Stomach (tissue), 19 donors: ENCODE measurements at regions of chr18 and their contacts with region 1.

Region 1: DNA sequence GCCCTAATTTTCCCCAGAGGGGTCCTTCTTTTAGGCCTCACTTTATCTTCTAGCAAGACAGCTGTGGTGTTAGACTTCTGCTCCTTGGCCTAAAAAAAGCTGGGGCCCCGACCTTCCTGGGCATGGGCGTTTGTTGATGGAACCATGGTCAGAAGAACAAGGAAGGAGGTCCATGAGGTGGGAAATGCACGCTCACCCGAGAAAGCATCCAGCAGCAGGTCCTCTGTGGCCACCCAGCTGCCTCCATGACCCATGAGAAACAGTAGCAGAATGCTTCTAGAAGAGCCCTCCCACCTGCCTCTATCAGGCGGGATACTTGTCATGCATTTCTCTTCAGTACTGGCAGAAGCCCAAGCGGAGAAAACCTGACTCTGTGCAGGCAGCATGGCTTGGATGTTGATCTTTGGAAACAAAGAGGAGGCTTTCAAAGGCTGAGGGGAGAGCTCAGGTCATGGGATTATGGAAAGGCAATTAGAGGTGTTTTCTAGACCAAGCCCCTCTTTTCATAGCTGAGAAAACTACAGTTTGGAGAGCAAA is 249.1 kb downstream of the FAM210A start:
- DNase-seq: no peak
- H3K4me3 ChIP-seq: no peak overlapping the region
- H3K27ac ChIP-seq: no peak overlapping the region
- H3K4me1 ChIP-seq: peaks cover 0 to 4% (median 0%) of the 10 kb centered on the region in 4 donors
- H3K27me3 ChIP-seq: no peaks in the 10 kb centered on the region
- CTCF ChIP-seq: no peak
- EP300 ChIP-seq: no peak
- POLR2A ChIP-seq: no peak

Region 2: DNA sequence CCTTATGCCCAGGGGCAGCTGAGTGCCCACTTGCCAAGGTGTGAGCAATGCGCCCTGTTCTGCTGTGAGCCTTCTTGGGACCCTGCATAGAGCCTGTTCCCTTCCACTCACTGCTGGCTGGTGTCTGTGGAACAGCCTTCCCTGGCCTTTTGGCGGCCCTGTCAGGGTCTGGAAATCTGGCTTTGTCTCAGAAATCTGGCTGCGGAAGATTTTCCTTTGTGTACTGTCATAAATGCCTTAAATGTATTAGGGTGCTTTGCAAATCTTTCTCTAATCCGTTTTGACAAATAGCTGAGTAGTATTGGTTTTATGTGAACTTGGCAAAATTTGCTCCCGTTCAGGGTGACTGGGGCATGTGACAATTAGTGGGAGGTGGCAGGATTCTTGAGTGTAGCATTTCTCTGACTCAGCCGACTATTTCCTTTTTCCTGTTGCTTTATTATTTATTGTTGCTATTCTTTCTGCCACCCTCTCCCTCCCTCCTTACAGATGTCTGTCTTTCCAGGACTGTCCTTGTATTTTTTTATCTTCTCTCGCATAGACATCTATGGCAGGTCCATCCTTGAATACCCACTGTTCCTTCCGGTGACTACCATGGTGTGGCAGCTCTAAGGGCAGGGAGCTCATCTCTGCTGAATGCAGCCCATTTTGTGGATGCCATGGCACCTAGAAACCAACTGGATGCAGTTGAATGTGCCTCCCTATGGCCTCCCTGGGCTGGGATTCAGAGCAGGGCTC is 216.8 kb before region 1 on chr18:
- intact Hi-C with region 1: loop called (anchors 5 kb)
- DNase-seq: no peak
- H3K4me3 ChIP-seq: no peak overlapping the region
- H3K27ac ChIP-seq: peak overlapping the region in 4 of 5 donors; percentile 10 to 79 (median 52)
- H3K4me1 ChIP-seq: peaks cover 3 to 59% (median 37%) of the 10 kb centered on the region in 4 donors
- H3K27me3 ChIP-seq: no peaks in the 10 kb centered on the region
- CTCF ChIP-seq: no peak
- EP300 ChIP-seq: no peak
- POLR2A ChIP-seq: no peak